ENCODE measurements at regions of chr16 and their contacts with region 1.

Region 1: DNA sequence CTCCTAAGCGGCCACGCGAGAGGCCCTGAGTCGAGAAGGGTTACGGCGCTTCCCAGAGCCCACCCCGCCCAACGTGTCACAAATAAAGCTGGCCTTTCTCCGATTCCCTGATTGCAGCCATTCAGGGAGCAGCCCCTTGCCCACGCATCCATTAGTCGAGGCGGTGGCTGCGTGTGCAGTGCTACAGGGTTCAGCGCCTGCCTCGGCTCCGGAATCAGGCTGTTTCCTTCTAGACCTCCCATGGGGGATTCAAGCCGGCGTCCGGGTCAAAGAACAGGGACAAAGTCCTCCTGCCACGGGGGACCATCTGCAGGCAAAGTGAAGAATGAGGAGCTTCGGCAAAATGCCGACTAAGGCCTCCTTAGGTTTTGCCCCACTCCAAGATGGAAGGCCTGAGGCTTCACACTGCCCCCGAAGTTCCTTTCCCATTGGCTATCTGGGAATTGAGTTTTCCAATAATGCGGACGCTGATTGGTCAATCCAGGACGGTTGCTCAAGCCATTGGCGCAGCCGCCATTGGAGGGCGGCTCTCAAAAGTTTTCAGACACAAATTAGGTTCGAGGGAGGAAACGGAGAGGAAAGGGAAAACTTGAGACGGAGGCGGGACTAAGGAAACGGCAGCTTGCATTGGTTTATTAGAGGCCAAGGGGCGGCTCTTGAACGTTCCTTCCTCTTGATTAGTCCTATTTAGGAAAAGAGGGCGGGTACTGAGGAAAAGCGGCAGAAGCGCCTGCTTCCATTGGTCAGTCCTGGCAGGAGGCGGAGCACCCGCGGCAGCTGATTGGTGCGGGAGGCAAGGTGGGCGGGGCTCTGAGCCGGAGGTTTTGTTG is 430 bp upstream of the KATNB1 start:
- DNase-seq: peak; percentile 99 to 100
- H3K4me3 ChIP-seq: peak overlapping the region; percentile 82 to 91
- H3K27ac ChIP-seq: peak overlapping the region; percentile 79 to 88
- H3K4me1 ChIP-seq: peaks cover 9 to 18% of the 10 kb centered on the region in 2 donors
- H3K27me3 ChIP-seq: no peaks in the 10 kb centered on the region
- CTCF ChIP-seq: no peak

Region 2: GRCh38 chr16:56931892-56932720 is 803.0 kb before region 1 on chr16 and contains the start of gene HERPUD1:
- intact Hi-C with region 1: loop called (anchors 10 kb)
- DNase-seq: peak; percentile 92 to 99
- H3K4me3 ChIP-seq: peak within 1 kb of the TSS; percentile 99 to 100
- H3K27ac ChIP-seq: peak within 1 kb of the TSS; percentile 99 to 100
- H3K4me1 ChIP-seq: peaks cover 12 to 17% of the 10 kb centered on the region in 2 donors
- H3K27me3 ChIP-seq: no peaks in the 10 kb centered on the region
- CTCF ChIP-seq: peak in 2 of 3 experiments; percentile 5 to 14
- total RNA-seq, gene HERPUD1: 108 TPM

Region 3: GRCh38 chr16:57231821-57232350 is 503.3 kb before region 1 on chr16:
- intact Hi-C with region 1: no loop called
- DNase-seq: no peak
- H3K4me3 ChIP-seq: no peak overlapping the region
- H3K27ac ChIP-seq: no peak overlapping the region
- H3K4me1 ChIP-seq: no peaks in the 10 kb centered on the region
- H3K27me3 ChIP-seq: no peaks in the 10 kb centered on the region
- CTCF ChIP-seq: no peak

Region 4: GRCh38 chr16:57447186-57447962 is 287.8 kb before region 1 on chr16 and contains the starts of genes CIAPIN1 and COQ9:
- intact Hi-C with region 1: loop called (anchors 10 kb)
- DNase-seq: peak; percentile 76 to 96
- H3K4me3 ChIP-seq: peak within 1 kb of the TSS; percentile 90 to 95
- H3K27ac ChIP-seq: peak within 1 kb of the TSS; percentile 86 to 87
- H3K4me1 ChIP-seq: peaks cover 0 to 21% of the 10 kb centered on the region in 2 donors
- H3K27me3 ChIP-seq: no peaks in the 10 kb centered on the region
- CTCF ChIP-seq: no peak
- total RNA-seq, gene CIAPIN1: 28.7 TPM
- total RNA-seq, gene COQ9: 35.7 TPM

Region 5: GRCh38 chr16:57757326-57757786 is 22.2 kb after region 1 on chr16:
- intact Hi-C with region 1: loop called (anchors 1 kb)
- DNase-seq: peak; percentile 46 to 93
- H3K4me3 ChIP-seq: no peak overlapping the region
- H3K27ac ChIP-seq: no peak overlapping the region
- H3K4me1 ChIP-seq: no peaks in the 10 kb centered on the region
- H3K27me3 ChIP-seq: no peaks in the 10 kb centered on the region
- CTCF ChIP-seq: peak; percentile 92 to 98 (median 92)

Region 6: GRCh38 chr16:57816334-57816745 is 81.2 kb after region 1 on chr16:
- intact Hi-C with region 1: loop called (anchors 5 kb)
- DNase-seq: peak; percentile 86 to 97
- H3K4me3 ChIP-seq: no peak overlapping the region
- H3K27ac ChIP-seq: peak overlapping the region; percentile 87 to 92
- H3K4me1 ChIP-seq: peaks cover 4 to 16% of the 10 kb centered on the region in 2 donors
- H3K27me3 ChIP-seq: no peaks in the 10 kb centered on the region
- CTCF ChIP-seq: no peak

Region 7: DNA sequence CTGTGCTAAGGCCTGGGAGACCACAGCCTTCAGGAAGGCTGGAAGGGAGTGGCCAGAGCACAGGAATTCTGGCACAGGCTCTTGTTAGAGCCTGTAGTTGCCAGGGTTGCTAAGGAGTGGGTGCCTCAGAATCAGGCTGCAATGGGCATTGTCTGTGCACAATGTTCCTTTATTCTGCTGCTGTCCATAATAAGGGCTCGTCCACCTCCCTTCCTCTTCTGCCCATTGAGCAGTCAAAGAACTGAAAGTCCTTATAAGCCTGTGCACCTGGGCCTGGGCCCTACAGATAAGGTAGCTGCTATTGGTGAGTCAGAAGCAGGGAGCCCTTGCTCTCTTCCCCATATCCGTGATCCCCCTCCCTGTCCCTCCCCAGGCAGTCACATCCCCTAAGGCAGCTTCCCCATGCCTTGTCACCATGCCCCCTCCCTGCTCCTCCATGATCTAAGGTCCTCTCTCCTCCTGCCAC is 241.2 kb after region 1 on chr16:
- intact Hi-C with region 1: no loop called
- DNase-seq: no peak
- H3K4me3 ChIP-seq: no peak overlapping the region
- H3K27ac ChIP-seq: no peak overlapping the region
- H3K4me1 ChIP-seq: no peaks in the 10 kb centered on the region
- H3K27me3 ChIP-seq: no peaks in the 10 kb centered on the region
- CTCF ChIP-seq: no peak

Region 8: DNA sequence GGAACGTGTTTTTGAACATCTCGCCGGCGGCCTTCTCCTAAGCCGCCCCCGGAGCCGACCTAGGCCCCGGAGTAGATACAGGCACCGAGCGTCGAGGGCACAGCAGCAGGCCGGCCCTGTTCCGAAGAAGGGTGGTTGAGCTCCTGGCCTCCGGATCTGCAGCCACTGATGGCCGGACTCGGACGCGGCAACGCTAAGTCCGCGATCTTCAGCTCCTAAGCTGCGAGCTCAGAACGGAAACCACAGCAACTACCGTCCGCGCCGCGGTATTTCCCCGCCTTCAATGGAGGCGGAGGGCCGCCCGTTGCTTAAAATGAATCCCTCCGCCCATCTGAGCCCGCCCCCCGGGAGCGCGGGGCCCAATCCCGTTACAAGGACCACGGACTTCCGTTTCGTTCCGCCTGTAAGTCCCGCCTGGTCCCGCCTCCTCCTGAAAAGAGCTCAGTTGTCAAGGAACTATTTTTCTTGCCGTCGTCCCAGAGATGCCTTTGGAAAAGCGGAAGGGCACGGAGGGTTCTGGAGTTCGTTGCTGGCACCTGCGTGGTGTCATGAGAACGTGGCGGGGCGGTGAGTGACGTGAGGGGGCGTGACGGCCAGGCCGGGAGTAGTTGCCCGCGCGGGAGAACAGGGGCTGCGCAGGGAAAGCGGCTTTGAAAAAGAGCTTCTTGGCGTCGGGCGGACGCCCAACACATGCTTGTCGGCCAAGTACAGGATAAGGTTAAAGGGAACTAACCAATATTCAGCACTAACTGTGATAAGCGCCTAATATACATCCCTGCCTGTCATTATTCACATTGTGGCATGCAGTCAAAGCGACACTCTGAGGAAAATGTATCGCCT is 394.2 kb after region 1 on chr16 and contains the start of gene CFAP20:
- intact Hi-C with region 1: loop called (anchors 2 kb)
- DNase-seq: peak; percentile 94 to 100
- H3K4me3 ChIP-seq: peak within 1 kb of the TSS; percentile 93 to 99
- H3K27ac ChIP-seq: peak within 1 kb of the TSS; percentile 84 to 91
- H3K4me1 ChIP-seq: peaks cover 17 to 33% of the 10 kb centered on the region in 2 donors
- H3K27me3 ChIP-seq: no peaks in the 10 kb centered on the region
- CTCF ChIP-seq: no peak
- total RNA-seq, gene CFAP20: 39.1 TPM

Measured in ascending aorta (tissue), 2 donors.